ENCODE measurements at regions of chr10 and their contacts with region 1.

Region 1: GRCh38 chr10:17056781-17057428 is 72.7 kb downstream of the CUBN start:
- DNase-seq: no peak
- ATAC-seq: no peak
- H3K4me3 ChIP-seq: no peak overlapping the region
- H3K4me3 Mint-ChIP-seq: no peak overlapping the region
- H3K27ac ChIP-seq: no peak overlapping the region
- H3K27ac Mint-ChIP-seq: no peak overlapping the region
- H3K4me1 ChIP-seq: no peaks in the 10 kb centered on the region
- H3K4me1 Mint-ChIP-seq: peaks cover 0 to 10% (median 5%) of the 10 kb centered on the region in 7 donors
- H3K27me3 ChIP-seq: no peaks in the 10 kb centered on the region
- H3K27me3 Mint-ChIP-seq: peaks cover 0 to 7% (median 0%) of the 10 kb centered on the region in 5 donors

Region 2: DNA sequence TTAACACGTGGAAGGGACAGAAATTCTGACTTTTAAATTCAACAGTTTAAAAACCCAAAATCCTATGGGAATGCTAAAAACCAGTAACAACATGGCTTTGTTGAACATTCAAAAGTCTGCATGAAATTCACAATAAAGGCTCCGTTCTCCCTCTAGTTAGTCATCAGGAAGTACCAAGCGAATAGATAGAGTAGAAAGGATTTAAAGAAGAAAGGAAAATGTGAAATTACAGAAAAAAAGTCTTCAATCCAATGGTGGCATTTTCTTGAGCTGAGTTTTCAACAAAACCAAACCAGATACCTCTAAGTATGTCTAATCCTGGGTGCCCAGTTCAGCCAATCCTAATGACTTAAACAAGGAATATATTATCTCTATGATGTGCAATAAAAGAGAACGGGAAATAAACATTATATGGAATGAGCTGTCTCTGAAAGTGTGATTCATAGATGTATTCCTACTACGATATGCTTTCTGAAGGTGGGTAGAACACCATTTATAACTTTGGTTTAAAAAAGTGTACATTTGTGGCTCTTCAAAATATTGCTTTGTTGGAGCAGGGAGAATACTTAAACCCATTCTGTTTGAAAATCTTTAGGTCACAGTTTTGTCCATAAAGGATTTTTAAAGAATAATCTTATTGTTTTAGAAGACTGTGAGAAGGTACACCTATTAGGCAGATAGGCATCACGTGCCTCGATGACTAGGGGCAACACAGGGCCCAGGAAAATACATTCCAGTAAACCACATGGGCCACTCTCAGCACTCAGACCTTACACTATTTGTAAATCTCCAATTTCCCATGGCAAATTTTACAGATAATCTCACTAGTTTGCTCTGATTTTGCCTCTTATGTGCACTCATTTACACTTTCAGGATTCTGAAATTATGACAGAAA is 15.0 kb before region 1 on chr10:
- CTCF ChIA-PET with region 1: no interaction called
- POLR2A ChIA-PET with region 1: no interaction called
- intact Hi-C with region 1: loop called in 1 of 2 experiments (anchors 1 kb)
- DNase-seq: no peak
- ATAC-seq: no peak
- H3K4me3 ChIP-seq: no peak overlapping the region
- H3K4me3 Mint-ChIP-seq: no peak overlapping the region
- H3K27ac ChIP-seq: no peak overlapping the region
- H3K27ac Mint-ChIP-seq: no peak overlapping the region
- H3K4me1 ChIP-seq: no peaks in the 10 kb centered on the region
- H3K4me1 Mint-ChIP-seq: peaks cover 0 to 5% (median 0%) of the 10 kb centered on the region in 7 donors
- H3K27me3 ChIP-seq: no peaks in the 10 kb centered on the region
- H3K27me3 Mint-ChIP-seq: no peaks in the 10 kb centered on the region